GM10248 (cell line): ENCODE measurements at regions of chr11 and their contacts with region 1.

Region 1: GRCh38 chr11:58579192-58580129 is 598 bp downstream of the ZFP91 start:
- DNase-seq: peak; percentile 77
- CTCF ChIP-seq: peak; percentile 91

Region 2: DNA sequence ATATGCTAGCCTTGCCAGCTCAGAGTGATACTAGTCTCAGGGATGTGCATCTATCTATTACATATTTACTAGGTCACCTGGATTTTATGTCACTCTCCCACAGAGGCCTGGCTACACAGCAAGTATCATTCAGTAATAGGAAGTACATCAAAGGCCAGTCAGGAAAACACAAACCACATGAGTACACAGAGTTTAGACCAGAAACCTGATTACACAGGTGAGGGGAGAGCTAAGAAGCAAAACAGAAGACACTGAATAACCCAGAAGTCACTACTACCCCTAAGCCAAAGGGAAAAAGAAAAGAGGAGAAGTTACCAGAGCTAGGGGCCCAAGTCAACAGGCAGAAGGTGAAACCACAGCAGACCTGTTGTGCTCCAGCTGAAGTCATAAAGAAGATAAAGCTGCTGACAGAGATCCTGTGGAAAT is 17.1 kb before region 1 on chr11:
- CTCF ChIA-PET with region 1: interaction called, 40 read pairs
- POLR2A ChIA-PET with region 1: interaction called, 11 read pairs
- DNase-seq: peak; percentile 17
- CTCF ChIP-seq: no peak